Heart left ventricle (tissue), 16 donors: ENCODE measurements at regions of chr15 and their contacts with region 1.

Region 1: GRCh38 chr15:100873029-100873677 is 6.5 kb upstream of the ALDH1A3 start:
- DNase-seq: peak in 3 of 5 donors; percentile 38 to 51 (median 45)
- ATAC-seq: peak in 3 of 4 donors; percentile 64 to 80 (median 65)
- H3K4me3 ChIP-seq: no peak overlapping the region
- H3K27ac ChIP-seq: no peak overlapping the region
- H3K4me1 ChIP-seq: no peaks in the 10 kb centered on the region
- H3K27me3 ChIP-seq: peaks cover 0 to 12% (median 3%) of the 10 kb centered on the region in 9 donors
- CTCF ChIP-seq: peak; percentile 85 to 95 (median 91)
- POLR2A ChIP-seq: no peak

Region 2: GRCh38 chr15:100627789-100628395 is 245.3 kb before region 1 on chr15:
- intact Hi-C with region 1: loop called (anchors 1 to 5 kb)
- DNase-seq: peak in 4 of 5 donors; percentile 33 to 60 (median 38)
- ATAC-seq: peak; percentile 56 to 87 (median 76)
- H3K4me3 ChIP-seq: no peak overlapping the region
- H3K27ac ChIP-seq: no peak overlapping the region
- H3K4me1 ChIP-seq: peaks cover 0 to 16% (median 0%) of the 10 kb centered on the region in 12 donors
- H3K27me3 ChIP-seq: no peaks in the 10 kb centered on the region
- CTCF ChIP-seq: peak; percentile 76 to 92 (median 84)
- POLR2A ChIP-seq: no peak

Region 3: DNA sequence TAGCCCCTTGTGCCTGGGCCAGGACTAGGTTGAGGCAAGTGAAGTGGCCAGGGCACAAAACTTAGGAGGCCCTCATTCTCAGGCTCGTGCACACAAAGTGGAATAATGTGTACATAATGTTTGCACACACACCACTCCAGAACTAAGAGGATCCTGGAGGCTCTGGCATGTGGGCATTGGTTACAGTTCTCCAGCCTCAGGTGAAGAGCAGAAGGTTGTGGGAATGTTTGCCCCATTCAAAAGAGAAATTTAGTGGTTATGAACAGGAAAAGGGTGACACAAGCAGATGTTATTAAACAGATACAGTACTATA is 239.4 kb before region 1 on chr15:
- intact Hi-C with region 1: loop called in 6 of 10 experiments (anchors 1 to 5 kb)
- DNase-seq: no peak
- ATAC-seq: no peak
- H3K4me3 ChIP-seq: no peak overlapping the region
- H3K27ac ChIP-seq: no peak overlapping the region
- H3K4me1 ChIP-seq: peaks cover 0 to 4% (median 0%) of the 10 kb centered on the region in 12 donors
- H3K27me3 ChIP-seq: no peaks in the 10 kb centered on the region
- CTCF ChIP-seq: no peak
- POLR2A ChIP-seq: no peak

Region 4: DNA sequence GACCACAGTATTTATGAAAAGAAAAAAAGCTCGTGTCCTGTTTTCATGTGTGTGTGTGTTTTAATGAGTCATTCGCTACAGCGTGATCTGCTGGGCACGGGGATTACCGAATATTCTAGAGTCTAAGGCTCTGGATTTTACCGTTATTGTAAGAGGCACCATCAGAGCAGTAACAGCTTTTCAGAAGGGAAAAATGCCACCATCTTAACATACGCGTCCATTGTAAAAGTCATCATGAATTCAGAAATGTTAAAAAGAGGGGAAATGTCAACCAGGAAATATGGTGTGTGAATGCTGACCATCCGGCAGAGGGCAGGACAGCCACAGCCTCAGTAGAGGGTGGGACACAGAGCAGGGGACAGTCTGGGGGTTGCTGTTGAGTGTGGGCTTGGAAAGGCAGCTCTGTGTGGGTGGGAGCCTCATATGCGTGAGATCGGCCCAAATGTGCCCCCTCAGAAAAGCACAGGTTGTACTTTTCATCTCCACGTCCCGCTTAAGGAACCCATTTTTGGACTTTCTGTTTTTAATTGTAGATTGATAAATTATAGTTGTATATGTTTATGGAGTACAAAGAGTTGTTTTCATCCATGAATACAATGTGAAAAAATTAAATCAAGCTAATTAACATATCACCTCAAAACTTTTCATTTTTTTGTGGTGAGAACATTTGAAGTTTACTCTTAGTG is 201.2 kb before region 1 on chr15:
- intact Hi-C with region 1: loop called in 3 of 10 experiments (anchors 2 to 5 kb)
- DNase-seq: no peak
- ATAC-seq: peak in 3 of 4 donors; percentile 52 to 62 (median 62)
- H3K4me3 ChIP-seq: no peak overlapping the region
- H3K27ac ChIP-seq: no peak overlapping the region
- H3K4me1 ChIP-seq: peaks cover 0 to 13% (median 2%) of the 10 kb centered on the region in 12 donors
- H3K27me3 ChIP-seq: peaks cover 0 to 3% (median 0%) of the 10 kb centered on the region in 9 donors
- CTCF ChIP-seq: peak in 10 of 12 donors; percentile 11 to 58 (median 38)
- POLR2A ChIP-seq: no peak

Region 5: GRCh38 chr15:100713163-100713867 is 159.8 kb before region 1 on chr15:
- intact Hi-C with region 1: loop called in 1 of 10 experiments (anchors 10 kb)
- DNase-seq: no peak
- ATAC-seq: peak in 3 of 4 donors; percentile 32 to 47 (median 42)
- H3K4me3 ChIP-seq: no peak overlapping the region
- H3K27ac ChIP-seq: peak overlapping the region in 3 of 12 donors; percentile 21 to 62 (median 30)
- H3K4me1 ChIP-seq: peaks cover 0 to 44% (median 16%) of the 10 kb centered on the region in 12 donors
- H3K27me3 ChIP-seq: no peaks in the 10 kb centered on the region
- CTCF ChIP-seq: no peak
- POLR2A ChIP-seq: no peak

Region 6: GRCh38 chr15:101008158-101009139 is 135.3 kb after region 1 on chr15:
- intact Hi-C with region 1: loop called in 1 of 10 experiments (anchors 5 kb)
- DNase-seq: peak; percentile 70 to 92 (median 79)
- ATAC-seq: peak; percentile 82 to 89 (median 86)
- H3K4me3 ChIP-seq: peak overlapping the region in 11 of 12 donors; percentile 30 to 69 (median 50)
- H3K27ac ChIP-seq: peak overlapping the region in 1 of 12 donors; percentile 48
- H3K4me1 ChIP-seq: peaks cover 0 to 20% (median 11%) of the 10 kb centered on the region in 12 donors
- H3K27me3 ChIP-seq: no peaks in the 10 kb centered on the region
- CTCF ChIP-seq: peak; percentile 91 to 99 (median 97)
- POLR2A ChIP-seq: peak in 1 of 2 donors; percentile 14